Activated B cell treated with CpG ODN at 0.5 μM for 24 hours (primary cell): ENCODE measurements at regions of chr14 and their contacts with region 1.

Region 1: DNA sequence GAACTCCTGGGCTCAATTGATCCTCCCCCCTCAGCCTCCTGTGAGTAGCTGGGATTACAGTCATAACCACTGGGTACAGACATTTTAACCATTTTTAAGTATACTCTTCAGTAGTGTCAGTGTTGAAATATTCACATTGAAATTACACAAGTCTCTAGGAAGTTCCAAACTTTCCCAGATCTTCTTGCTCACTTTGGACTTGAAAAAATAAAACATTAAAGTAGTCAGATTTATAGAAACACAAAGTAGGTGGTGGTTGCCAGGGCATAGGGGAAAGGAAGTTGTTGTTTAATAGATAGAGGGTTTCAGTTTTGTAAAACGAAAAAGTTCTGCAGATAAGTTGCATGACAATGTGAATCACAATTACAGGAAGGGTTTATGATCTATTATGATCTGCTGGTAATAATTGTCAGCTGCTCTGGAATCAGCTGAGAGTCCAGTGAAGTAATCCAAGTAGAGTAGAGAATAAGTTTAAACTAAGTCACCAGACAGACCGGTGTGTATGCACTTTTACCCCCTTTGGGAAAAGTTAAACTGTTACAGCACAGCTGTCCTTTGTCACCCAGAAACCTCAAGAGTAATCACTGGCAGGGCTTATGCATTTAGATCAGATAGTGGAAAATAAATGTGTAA is 27.4 kb downstream of the PCNX1 start:
- DNase-seq: no peak
- ATAC-seq: no peak
- H3K4me3 Mint-ChIP-seq: peak overlapping the region; percentile 5
- H3K27ac Mint-ChIP-seq: peak overlapping the region; percentile 57
- H3K4me1 Mint-ChIP-seq: peaks cover 48% of the 10 kb centered on the region
- H3K27me3 Mint-ChIP-seq: no peaks in the 10 kb centered on the region
- CTCF ChIP-seq: no peak

Region 2: GRCh38 chr14:70821584-70822529 is 112.8 kb before region 1 on chr14:
- CTCF ChIA-PET with region 1: no interaction called
- POLR2A ChIA-PET with region 1: no interaction called
- intact Hi-C with region 1: no loop called
- DNase-seq: peak; percentile 36
- ATAC-seq: peak; percentile 25
- H3K4me3 Mint-ChIP-seq: peak overlapping the region; percentile 73
- H3K27ac Mint-ChIP-seq: no peak overlapping the region
- H3K4me1 Mint-ChIP-seq: peaks cover 19% of the 10 kb centered on the region
- H3K27me3 Mint-ChIP-seq: peaks cover 30% of the 10 kb centered on the region
- CTCF ChIP-seq: no peak

Region 3: GRCh38 chr14:70919774-70920173 is 14.8 kb before region 1 on chr14:
- CTCF ChIA-PET with region 1: no interaction called
- POLR2A ChIA-PET with region 1: no interaction called
- intact Hi-C with region 1: loop called (anchors 2 kb)
- DNase-seq: no peak
- ATAC-seq: no peak
- H3K4me3 Mint-ChIP-seq: peak overlapping the region; percentile 35
- H3K27ac Mint-ChIP-seq: no peak overlapping the region
- H3K4me1 Mint-ChIP-seq: peaks cover 73% of the 10 kb centered on the region
- H3K27me3 Mint-ChIP-seq: no peaks in the 10 kb centered on the region
- CTCF ChIP-seq: no peak

Region 4: DNA sequence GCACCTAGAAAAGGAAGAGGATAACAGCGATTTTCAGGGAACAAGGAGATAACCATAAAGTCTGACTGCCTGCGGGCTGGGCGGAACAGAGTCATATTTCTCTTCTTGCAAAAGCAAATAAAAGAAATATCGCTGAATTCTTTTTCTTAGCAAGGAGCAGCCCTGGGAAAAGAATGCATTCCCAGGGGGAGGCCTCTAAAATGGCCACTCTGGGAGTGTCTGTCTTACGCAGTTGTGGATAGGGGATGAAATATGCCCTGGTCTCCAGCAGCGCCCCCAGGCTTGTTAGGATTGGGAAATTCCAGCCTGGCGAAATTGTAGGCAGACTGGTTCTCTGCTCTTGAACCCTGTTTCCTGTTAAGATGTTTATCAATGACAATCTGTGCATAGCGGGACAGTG is 13.1 kb after region 1 on chr14:
- CTCF ChIA-PET with region 1: no interaction called
- POLR2A ChIA-PET with region 1: no interaction called
- intact Hi-C with region 1: loop called (anchors 2 kb)
- DNase-seq: no peak
- ATAC-seq: no peak
- H3K4me3 Mint-ChIP-seq: no peak overlapping the region
- H3K27ac Mint-ChIP-seq: no peak overlapping the region
- H3K4me1 Mint-ChIP-seq: peaks cover 4% of the 10 kb centered on the region
- H3K27me3 Mint-ChIP-seq: no peaks in the 10 kb centered on the region
- CTCF ChIP-seq: no peak

Region 5: GRCh38 chr14:71060825-71061455 is 126.3 kb after region 1 on chr14:
- CTCF ChIA-PET with region 1: no interaction called
- POLR2A ChIA-PET with region 1: no interaction called
- intact Hi-C with region 1: no loop called
- DNase-seq: no peak
- ATAC-seq: no peak
- H3K4me3 Mint-ChIP-seq: no peak overlapping the region
- H3K27ac Mint-ChIP-seq: no peak overlapping the region
- H3K4me1 Mint-ChIP-seq: no peaks in the 10 kb centered on the region
- H3K27me3 Mint-ChIP-seq: no peaks in the 10 kb centered on the region
- CTCF ChIP-seq: no peak